Adrenal gland (tissue), 19 donors: ENCODE measurements at regions of chr11 and their contacts with region 1.

Region 1: GRCh38 chr11:78039919-78040671 is 17.0 kb upstream of the KCTD14 start:
- DNase-seq: peak; percentile 78 to 92 (median 91)
- H3K4me3 ChIP-seq: peak overlapping the region in 1 of 4 donors; percentile 18
- H3K27ac ChIP-seq: peak overlapping the region; percentile 77 to 92 (median 85)
- H3K4me1 ChIP-seq: peaks cover 16 to 24% of the 10 kb centered on the region in 2 donors
- H3K27me3 ChIP-seq: no peaks in the 10 kb centered on the region
- CTCF ChIP-seq: no peak
- POLR2A ChIP-seq: peak in 1 of 2 donors; percentile 40

Region 2: DNA sequence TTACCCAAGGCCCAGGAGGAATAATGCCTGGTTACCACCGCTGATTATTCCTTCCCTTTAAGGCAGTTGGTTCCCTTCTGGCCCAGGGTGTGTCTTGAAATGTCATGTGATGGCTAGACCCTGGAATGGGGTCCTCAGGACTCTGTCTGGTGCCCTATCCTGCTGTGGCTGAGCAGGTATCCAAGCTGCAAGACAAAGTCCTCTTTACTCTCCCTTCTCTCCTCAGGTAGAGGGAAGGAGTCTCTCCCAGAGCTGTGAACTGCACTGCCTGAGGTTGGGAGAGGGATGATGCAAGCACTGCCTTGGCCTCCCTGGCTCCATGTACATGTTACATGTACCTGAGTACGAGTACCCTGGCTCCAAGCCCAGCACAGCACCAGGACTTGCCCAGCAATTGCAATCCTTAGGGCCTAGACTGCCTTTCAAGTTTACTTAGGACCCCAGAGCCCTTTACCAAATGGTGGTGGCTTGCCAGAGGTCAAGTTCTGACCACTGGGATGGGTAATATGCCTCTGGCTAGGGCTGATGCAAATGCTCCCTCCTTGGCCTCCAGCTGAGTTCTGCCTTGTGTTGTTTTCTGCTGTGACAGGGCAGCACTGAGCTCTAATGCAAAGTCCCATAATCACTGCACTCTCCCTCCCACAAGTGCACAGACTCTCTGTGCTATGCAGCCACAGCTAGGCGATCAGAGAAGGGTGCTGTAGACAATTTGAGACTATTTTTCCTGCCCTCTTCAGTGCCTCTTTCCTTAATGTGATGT is 471.0 kb before region 1 on chr11:
- intact Hi-C with region 1: no loop called
- DNase-seq: no peak
- H3K4me3 ChIP-seq: no peak overlapping the region
- H3K27ac ChIP-seq: no peak overlapping the region
- H3K4me1 ChIP-seq: peaks cover 0 to 17% of the 10 kb centered on the region in 2 donors
- H3K27me3 ChIP-seq: no peaks in the 10 kb centered on the region
- CTCF ChIP-seq: no peak
- POLR2A ChIP-seq: no peak

Region 3: GRCh38 chr11:78000193-78000592 is 39.9 kb before region 1 on chr11:
- intact Hi-C with region 1: loop called in 1 of 2 experiments (anchors 5 kb)
- DNase-seq: peak; percentile 40 to 86 (median 71)
- H3K4me3 ChIP-seq: no peak overlapping the region
- H3K27ac ChIP-seq: no peak overlapping the region
- H3K4me1 ChIP-seq: peaks cover 2 to 3% of the 10 kb centered on the region in 2 donors
- H3K27me3 ChIP-seq: no peaks in the 10 kb centered on the region
- CTCF ChIP-seq: peak; percentile 56 to 72 (median 66)
- POLR2A ChIP-seq: no peak